GM10248 (cell line): ENCODE measurements at regions of chr4 and their contacts with region 1.

Region 1: DNA sequence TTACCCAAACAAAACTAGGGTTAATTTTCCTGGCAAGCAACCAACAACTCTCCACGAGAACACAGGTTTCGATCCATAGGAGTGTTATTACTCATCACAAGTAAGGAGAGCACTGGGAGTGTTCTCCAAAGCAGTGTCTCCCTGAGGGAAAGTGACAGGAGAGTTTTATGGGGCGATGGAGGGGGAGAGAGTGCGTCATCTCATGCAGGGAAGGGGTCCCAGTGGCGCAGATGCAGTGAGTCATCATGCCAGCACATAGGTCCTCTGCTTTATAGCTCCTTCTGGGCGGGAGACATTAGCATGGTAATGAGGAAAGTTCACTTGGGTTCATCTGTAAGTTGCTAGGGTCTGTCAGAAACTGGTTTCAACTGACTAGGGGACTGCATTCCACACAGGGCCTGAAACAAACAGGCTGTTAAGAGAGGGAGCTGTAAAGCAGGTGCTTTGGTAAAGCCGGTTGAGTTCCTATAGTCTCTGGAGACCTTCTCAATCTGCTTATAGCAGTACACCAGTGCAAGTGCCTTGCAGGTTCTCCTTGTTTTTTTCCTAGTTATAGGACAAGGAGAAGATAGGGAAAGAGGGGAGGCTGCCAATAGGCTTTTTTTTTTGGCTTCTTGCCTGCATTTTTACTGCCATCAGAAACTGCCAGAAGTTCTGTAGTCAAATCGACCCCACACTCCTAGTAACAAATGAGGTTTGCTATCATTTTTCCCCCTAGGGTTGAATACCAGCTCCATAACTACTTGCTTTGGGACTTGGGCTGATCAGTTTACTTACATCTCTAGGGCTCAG is 12.8 kb upstream of the BOD1L1 start:
- DNase-seq: no peak
- CTCF ChIP-seq: no peak

Region 2: GRCh38 chr4:13627606-13628301 is 12.6 kb before region 1 on chr4 and contains the start of gene BOD1L1:
- CTCF ChIA-PET with region 1: interaction called, 19 read pairs
- POLR2A ChIA-PET with region 1: no interaction called
- DNase-seq: peak; percentile 90
- CTCF ChIP-seq: peak; percentile 63